Mucosa of descending colon (tissue), 3 donors: ENCODE measurements at regions of chr9 and their contacts with region 1.

Region 1: DNA sequence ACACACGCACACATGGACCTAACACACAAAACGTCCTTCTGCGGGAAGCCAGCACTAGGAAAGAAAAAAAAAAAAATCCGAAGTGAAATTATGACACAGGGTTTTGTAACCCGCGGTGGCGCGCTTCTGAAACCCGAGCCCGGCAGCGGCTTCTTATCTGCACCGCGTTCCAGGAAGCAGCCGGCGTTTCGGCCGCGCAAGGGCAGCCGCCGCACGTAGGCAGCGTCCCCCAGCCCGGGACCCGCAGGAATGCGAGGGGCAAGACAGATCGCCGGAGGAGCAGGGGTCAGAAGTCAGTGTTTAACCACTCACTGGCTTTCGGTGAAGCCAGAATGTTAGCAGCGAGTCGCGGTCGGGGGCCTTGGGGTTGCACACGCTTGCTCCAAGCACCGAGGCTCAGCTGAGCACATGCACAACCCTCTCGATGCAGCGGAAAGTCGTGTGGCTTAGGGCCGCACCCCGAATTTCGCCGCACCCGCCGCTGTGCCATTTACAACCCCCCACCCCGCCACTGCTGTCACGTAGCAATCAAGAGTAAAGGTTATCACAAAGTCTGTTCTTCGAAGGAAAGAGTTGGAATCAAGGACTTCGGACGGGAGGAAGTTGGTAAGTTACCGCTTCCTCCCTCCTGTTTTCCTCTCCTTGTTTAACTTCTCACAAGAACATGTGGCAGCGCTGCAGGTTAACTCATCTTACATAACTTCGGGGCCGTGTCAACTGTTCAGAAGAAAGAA is 167.9 kb downstream of the AUH start:
- DNase-seq: peak; percentile 90 to 93 (median 91)
- ATAC-seq: peak; percentile 81
- H3K4me3 ChIP-seq: no peak overlapping the region
- H3K4me1 ChIP-seq: peaks cover 52% of the 10 kb centered on the region
- CTCF ChIP-seq: no peak

Region 2: DNA sequence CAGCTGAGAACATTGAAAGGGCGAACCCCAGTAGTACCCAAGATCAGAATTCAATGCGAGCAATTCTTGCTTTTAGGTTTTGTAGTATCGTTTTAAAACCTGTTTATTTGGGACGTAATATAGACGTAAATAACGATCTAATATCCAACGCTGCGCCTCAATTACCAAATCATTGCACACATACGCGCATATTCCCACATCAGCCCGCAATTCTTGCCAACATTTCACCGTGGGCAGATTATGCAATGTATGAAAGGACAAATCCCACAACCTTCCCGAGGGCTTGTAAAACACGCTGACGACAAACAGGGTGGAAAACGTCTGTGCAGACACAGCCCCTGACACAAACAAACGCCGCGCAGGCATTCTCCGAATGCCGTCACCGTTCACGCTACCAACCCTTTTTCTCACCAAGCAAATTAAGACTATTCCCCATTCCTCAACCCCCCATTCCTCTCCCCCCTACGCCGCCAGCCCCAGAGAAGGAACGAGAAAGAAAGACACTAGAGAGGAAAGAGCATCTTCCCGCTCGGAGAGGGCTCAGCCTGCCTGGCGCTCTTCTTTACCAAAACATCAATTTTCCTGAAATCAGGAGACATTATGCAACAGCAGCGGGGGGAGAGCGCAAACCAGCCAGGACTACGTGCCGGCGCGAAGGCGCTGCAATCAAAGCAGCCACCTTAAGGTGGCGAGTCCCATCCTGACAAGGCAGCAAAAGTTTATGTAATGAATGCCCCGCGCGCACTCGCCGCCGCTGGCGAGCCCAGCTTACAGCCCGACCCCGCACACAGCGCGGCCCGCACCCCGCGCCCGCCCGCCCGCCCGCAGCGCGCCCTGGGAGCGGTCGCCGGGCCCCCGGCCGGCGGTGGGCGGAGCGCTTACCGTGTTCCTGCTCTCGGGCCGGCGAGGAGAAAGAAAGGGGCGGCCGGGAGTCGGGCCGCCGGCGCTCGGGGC is 229.2 kb after region 1 on chr9:
- intact Hi-C with region 1: loop called in 1 of 2 experiments (anchors 10 kb)
- DNase-seq: peak; percentile 75 to 78 (median 75)
- ATAC-seq: peak; percentile 28
- H3K4me3 ChIP-seq: peak overlapping the region; percentile 48
- H3K4me1 ChIP-seq: peaks cover 27% of the 10 kb centered on the region
- CTCF ChIP-seq: no peak